Sigmoid colon (tissue), 7 donors: ENCODE measurements at regions of chr9 and their contacts with region 1.

Region 1: DNA sequence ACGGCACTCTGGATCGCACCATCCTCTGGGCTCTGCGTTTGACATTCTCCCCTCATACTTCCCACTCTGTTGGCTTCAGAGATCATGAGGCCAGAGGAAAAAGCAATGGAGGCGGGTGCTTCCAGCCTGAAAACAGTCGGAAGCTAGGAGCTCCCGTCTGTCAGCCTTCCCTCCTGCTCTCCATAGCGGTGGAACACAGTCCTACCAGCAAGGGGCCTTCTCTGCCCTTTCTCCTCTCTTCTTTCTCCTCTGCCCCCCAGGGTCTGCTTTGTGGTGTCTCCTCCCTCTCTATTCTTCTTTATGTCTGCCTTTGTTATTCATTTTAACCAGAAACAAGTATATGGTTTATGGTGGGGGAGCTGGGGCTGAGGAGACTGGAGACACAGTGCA is 152.5 kb upstream of the NFIB start:
- DNase-seq: no peak
- H3K4me3 ChIP-seq: no peak overlapping the region
- H3K27ac ChIP-seq: no peak overlapping the region
- H3K4me1 ChIP-seq: no peaks in the 10 kb centered on the region
- H3K27me3 ChIP-seq: no peaks in the 10 kb centered on the region
- CTCF ChIP-seq: no peak
- EP300 ChIP-seq: no peak
- POLR2A ChIP-seq: no peak

Region 2: GRCh38 chr9:14752271-14752670 is 285.8 kb after region 1 on chr9:
- intact Hi-C with region 1: loop called (anchors 10 kb)
- DNase-seq: no peak
- H3K4me3 ChIP-seq: no peak overlapping the region
- H3K27ac ChIP-seq: no peak overlapping the region
- H3K4me1 ChIP-seq: no peaks in the 10 kb centered on the region
- H3K27me3 ChIP-seq: no peaks in the 10 kb centered on the region
- CTCF ChIP-seq: no peak
- EP300 ChIP-seq: no peak
- POLR2A ChIP-seq: no peak